H1 (cell line): ENCODE measurements at regions of chr2 and their contacts with region 1.

Region 1: DNA sequence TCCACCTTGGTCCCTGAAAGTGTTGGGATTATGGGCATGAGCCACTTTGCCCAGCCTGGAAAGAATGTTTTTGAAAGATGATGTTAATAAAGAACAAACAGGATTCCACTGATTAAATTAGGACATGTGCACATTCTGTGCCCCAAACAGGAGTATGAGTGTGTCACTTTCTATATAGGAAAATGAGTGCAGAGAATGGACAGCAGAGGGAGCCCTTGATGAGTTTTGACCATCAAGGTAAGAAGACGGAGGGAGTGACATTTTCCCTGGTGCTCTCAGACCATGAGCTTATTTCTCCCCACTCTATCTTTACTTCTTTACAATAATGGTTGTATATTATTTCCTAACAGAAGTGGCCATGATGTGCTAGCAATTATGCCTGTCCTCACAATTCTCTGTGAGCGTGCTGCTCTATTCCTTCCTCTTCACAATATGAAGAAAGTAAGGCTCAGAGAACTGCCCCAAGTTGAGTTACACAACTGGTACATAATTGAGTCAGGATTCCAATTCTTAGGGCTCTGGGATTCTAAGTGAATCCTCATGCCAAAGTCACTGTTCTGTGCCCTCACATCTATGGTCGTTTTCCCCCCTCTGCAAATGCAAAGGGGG is 20.6 kb downstream of the RPL37A start:
- DNase-seq: peak in 1 of 2 experiments; percentile 61
- H3K4me3 ChIP-seq: no peak overlapping the region
- H3K27ac ChIP-seq: no peak overlapping the region
- H3K4me1 ChIP-seq: no peaks in the 10 kb centered on the region; a peak in 1 of 7 replicates
- H3K27me3 ChIP-seq: no peaks in the 10 kb centered on the region
- CTCF ChIP-seq: peak in 2 of 3 experiments; percentile 73 to 76; a peak in 3 of 4 replicates
- EP300 ChIP-seq: no peak
- POLR2A ChIP-seq: no peak
- RAD21 ChIP-seq: peak; percentile 86 to 88

Region 2: GRCh38 chr2:216507220-216508160 is 11.8 kb before region 1 on chr2:
- CTCF ChIA-PET with region 1: interaction called, 32 read pairs
- POLR2A ChIA-PET with region 1: interaction called, 27 read pairs
- DNase-seq: no peak
- H3K4me3 ChIP-seq: no peak overlapping the region
- H3K27ac ChIP-seq: no peak overlapping the region
- H3K4me1 ChIP-seq: peaks cover 0 to 2% (median 0%) of the 10 kb centered on the region in 4 experiments; a peak in 1 of 7 replicates
- H3K27me3 ChIP-seq: no peaks in the 10 kb centered on the region
- CTCF ChIP-seq: no peak
- EP300 ChIP-seq: no peak
- POLR2A ChIP-seq: no peak; a peak in 2 of 3 replicates
- RAD21 ChIP-seq: no peak

Region 3: DNA sequence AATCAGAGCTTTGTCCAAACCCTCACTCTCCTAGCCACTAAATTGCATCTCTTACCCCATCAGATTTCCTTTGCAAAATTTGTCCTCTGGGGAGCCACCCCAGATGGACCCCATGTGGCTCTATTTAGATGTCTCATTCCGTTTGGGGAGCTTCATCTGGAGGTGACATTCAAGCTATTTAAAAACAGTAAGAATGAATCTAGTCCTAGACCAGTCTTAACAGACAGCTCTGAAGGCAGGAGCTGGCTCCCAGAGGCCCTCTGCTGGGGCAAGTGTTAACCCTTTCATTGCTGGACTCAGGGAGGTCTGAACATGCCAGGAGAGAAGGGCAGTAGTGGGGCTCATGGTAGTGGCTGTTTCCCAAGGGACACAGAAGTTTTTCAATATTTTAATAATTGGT is 38.6 kb after region 1 on chr2:
- CTCF ChIA-PET with region 1: interaction called, 58 read pairs
- POLR2A ChIA-PET with region 1: interaction called, 4 read pairs
- DNase-seq: no peak
- H3K4me3 ChIP-seq: no peak overlapping the region
- H3K27ac ChIP-seq: no peak overlapping the region
- H3K4me1 ChIP-seq: peaks cover 7 to 18% (median 9%) of the 10 kb centered on the region in 4 experiments
- H3K27me3 ChIP-seq: no peaks in the 10 kb centered on the region
- CTCF ChIP-seq: no peak
- EP300 ChIP-seq: no peak
- POLR2A ChIP-seq: no peak
- RAD21 ChIP-seq: no peak

Region 4: GRCh38 chr2:216578325-216578724 is 59.1 kb after region 1 on chr2:
- CTCF ChIA-PET with region 1: interaction called, 16 read pairs
- POLR2A ChIA-PET with region 1: interaction called, 3 read pairs
- DNase-seq: no peak
- H3K4me3 ChIP-seq: no peak overlapping the region
- H3K27ac ChIP-seq: no peak overlapping the region
- H3K4me1 ChIP-seq: peaks cover 0 to 3% (median 1%) of the 10 kb centered on the region in 4 experiments; a peak in 3 of 7 replicates
- H3K27me3 ChIP-seq: no peaks in the 10 kb centered on the region; a peak in 1 of 7 replicates
- CTCF ChIP-seq: no peak
- EP300 ChIP-seq: no peak
- POLR2A ChIP-seq: no peak
- RAD21 ChIP-seq: no peak

Region 5: DNA sequence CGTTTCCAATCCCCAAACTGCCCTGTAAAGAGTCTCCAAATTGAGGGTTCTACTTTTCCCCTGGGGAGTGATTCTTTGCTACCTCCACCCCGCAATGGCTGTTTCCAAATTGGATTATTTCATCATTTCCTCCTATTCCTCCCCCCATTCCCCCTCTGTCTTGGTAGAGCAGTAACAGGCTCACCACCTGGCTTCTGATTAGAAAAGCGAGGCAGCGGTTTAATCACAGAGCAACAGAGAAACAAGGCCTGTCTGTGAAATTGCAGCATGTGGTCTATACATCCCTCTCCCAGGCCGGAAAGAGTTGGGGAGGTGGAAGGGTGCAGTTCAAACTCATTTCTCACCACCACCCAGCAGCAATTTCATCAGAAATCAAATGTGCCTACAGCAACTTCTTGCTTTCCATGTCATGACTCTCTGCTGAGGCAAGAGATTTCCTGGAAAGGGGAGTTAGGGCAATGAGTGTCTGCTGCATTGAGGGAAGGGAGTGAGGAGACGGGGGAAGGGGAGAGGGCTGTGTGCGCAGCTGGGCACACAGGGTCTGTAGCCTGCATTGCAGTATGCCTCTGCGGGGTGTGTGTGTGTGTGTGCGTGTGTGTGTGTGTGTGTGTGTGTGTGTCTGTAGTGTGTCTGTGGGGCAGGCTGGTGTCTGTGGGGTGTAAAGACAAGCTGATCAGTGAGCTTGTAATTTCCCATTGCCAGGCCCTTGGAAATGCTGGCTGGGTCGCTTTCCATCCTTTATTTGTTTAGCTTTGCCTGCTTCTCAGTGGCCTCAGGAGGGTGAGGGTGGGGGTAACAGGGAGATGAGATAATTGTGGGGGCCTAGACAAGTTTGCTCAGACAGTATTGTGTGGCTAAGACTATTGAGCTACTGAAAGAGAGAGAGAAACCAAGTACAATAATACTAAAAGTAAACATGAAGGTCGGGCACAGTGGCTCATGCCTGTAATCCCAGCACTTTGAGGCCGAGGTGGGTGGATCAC is 100.4 kb after region 1 on chr2:
- CTCF ChIA-PET with region 1: interaction called, 70 read pairs
- POLR2A ChIA-PET with region 1: no interaction called
- DNase-seq: peak in 1 of 2 experiments; percentile 57
- H3K4me3 ChIP-seq: no peak overlapping the region
- H3K27ac ChIP-seq: no peak overlapping the region; the same call in 1 of the 2 replicates
- H3K4me1 ChIP-seq: peaks cover 10 to 17% (median 14%) of the 10 kb centered on the region in 4 experiments
- H3K27me3 ChIP-seq: no peaks in the 10 kb centered on the region; a peak in 1 of 7 replicates
- CTCF ChIP-seq: no peak
- EP300 ChIP-seq: no peak
- POLR2A ChIP-seq: no peak
- RAD21 ChIP-seq: no peak

Region 6: GRCh38 chr2:216651351-216651881 is 132.2 kb after region 1 on chr2:
- CTCF ChIA-PET with region 1: interaction called, 493 read pairs
- POLR2A ChIA-PET with region 1: interaction called, 3 read pairs
- DNase-seq: no peak
- H3K4me3 ChIP-seq: no peak overlapping the region
- H3K27ac ChIP-seq: no peak overlapping the region
- H3K4me1 ChIP-seq: peaks cover 0 to 13% (median 5%) of the 10 kb centered on the region in 4 experiments; a peak in 6 of 7 replicates
- H3K27me3 ChIP-seq: no peaks in the 10 kb centered on the region
- CTCF ChIP-seq: no peak
- EP300 ChIP-seq: no peak
- POLR2A ChIP-seq: no peak
- RAD21 ChIP-seq: no peak

Region 7: GRCh38 chr2:216679221-216680019 is 160.2 kb after region 1 on chr2:
- CTCF ChIA-PET with region 1: interaction called, 54 read pairs
- POLR2A ChIA-PET with region 1: no interaction called
- DNase-seq: no peak
- H3K4me3 ChIP-seq: no peak overlapping the region
- H3K27ac ChIP-seq: no peak overlapping the region
- H3K4me1 ChIP-seq: peaks cover 0 to 4% (median 2%) of the 10 kb centered on the region in 4 experiments; a peak in 4 of 7 replicates
- H3K27me3 ChIP-seq: no peaks in the 10 kb centered on the region
- CTCF ChIP-seq: no peak
- EP300 ChIP-seq: no peak
- POLR2A ChIP-seq: no peak
- RAD21 ChIP-seq: no peak